Adrenal gland (tissue), 19 donors: ENCODE measurements at regions of chr12 and their contacts with region 1.

Region 1: DNA sequence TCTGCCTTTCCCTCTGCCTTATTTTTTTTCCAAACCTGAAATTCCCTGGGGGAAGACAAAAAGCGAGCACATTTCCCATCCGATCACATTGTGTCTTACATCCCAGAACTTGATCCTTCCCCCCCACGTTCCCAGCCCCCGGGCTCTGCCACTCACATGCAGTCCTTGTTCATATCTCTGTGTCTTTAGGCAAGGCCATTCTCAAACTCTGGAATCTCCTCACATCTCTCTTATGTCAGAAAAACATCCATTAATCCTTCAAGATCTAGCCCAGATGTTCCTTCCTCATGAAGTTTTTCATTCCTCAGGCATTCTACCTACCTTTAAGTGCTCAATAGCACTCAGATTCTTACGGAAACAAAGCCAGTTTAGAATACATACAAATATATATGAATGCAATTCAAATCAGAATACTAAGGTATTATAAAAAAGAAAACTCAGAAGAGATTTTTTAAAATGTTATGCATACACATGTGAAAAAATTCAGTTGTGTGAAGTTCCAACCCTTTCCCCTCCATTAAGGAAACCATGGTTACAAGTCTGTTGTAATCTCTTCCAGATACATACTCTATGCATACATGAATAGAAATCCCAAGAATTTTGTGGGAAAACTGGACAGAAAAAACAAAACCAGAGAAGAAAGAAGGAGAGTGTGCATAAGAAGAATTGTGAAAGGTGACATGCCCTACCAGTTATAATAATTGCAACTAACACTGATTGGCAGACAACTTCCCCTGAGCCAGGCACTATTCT is 120.3 kb downstream of the SLC38A1 start:
- DNase-seq: no peak
- H3K4me3 ChIP-seq: no peak overlapping the region
- H3K27ac ChIP-seq: no peak overlapping the region
- H3K4me1 ChIP-seq: no peaks in the 10 kb centered on the region
- H3K27me3 ChIP-seq: no peaks in the 10 kb centered on the region
- CTCF ChIP-seq: no peak
- POLR2A ChIP-seq: no peak

Region 2: GRCh38 chr12:46179683-46180452 is 31.4 kb after region 1 on chr12:
- intact Hi-C with region 1: loop called in 1 of 2 experiments (anchors 2 kb)
- DNase-seq: no peak
- H3K4me3 ChIP-seq: no peak overlapping the region
- H3K27ac ChIP-seq: no peak overlapping the region
- H3K4me1 ChIP-seq: no peaks in the 10 kb centered on the region
- H3K27me3 ChIP-seq: no peaks in the 10 kb centered on the region
- CTCF ChIP-seq: no peak
- POLR2A ChIP-seq: no peak